ENCODE measurements at regions of chr1 and their contacts with region 1.

Region 1: DNA sequence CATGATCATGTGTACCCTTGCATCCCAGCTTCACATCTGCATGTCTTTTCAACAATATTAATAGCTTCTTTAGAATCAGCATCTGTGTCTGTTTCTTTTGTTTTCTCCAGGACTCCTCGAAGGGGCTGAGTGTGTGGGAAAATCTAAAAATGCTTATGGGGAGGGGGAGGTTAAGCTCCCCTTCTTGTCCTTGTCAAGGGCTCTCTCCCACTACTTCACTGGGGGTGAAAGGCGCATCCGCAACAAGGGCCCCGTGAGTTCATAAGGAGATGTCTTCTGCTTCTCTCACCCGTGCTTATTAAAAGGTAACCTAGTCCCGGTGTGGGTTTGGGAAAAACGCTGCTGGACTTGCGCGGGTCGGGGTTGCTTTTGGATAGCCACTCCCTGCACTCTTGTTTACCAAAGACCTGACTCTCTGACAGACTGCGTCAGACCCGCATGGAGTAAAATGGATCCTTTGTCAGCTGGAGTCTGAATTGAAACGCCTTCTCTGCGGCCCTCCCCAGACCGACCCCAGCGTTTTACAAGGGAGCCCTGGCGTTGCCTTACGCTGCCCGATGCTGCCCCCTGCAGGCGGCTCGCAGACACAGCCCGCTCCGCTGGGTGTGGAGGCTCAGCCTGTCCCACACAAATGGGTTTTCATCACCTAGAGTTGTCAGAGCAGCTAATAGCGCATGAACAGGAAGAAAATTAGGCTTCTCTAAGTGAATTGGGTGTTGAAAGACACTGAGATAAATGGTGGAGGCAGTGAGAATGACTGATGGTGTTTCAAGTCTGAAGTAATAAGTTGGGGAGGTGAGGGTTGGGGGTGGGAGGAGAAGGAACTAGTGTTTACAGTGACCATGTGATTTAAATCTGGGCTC is 53.8 kb downstream of the IER5 start:
- DNase-seq: peak; percentile 76 to 89 (median 80)
- H3K4me3 ChIP-seq: no peak overlapping the region
- H3K4me3 Mint-ChIP-seq: peak overlapping the region in 1 of 7 donors; percentile 36
- H3K27ac ChIP-seq: no peak overlapping the region
- H3K27ac Mint-ChIP-seq: peak overlapping the region in 5 of 8 donors; percentile 13 to 58 (median 47)
- H3K4me1 ChIP-seq: peaks cover 18% of the 10 kb centered on the region
- H3K4me1 Mint-ChIP-seq: peaks cover 21 to 30% (median 29%) of the 10 kb centered on the region in 3 donors
- H3K27me3 ChIP-seq: no peaks in the 10 kb centered on the region
- H3K27me3 Mint-ChIP-seq: peaks cover 0 to 3% of the 10 kb centered on the region in 2 donors

Region 2: DNA sequence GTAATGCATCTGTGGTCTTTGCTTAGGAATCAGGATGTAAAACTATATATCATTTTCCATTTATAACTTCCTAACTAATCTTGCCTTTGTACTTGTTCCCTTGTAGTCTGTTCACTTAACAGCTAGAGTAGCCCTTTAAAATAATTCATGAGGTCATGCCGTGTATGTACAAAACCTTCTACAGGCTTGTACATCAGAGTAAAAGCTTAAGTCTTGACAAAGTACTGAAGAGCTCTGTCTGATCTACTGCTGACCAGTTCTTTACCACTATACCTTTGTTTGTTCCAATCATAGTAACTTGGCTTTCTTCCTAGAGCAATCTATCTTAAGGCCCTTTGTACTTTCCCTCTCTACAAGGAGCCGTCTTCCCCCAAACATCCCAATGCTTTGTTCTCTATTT is 320.4 kb before region 1 on chr1:
- CTCF ChIA-PET with region 1: no interaction called
- POLR2A ChIA-PET with region 1: no interaction called
- DNase-seq: no peak
- H3K4me3 ChIP-seq: no peak overlapping the region
- H3K4me3 Mint-ChIP-seq: no peak overlapping the region
- H3K27ac ChIP-seq: no peak overlapping the region
- H3K27ac Mint-ChIP-seq: no peak overlapping the region
- H3K4me1 ChIP-seq: no peaks in the 10 kb centered on the region
- H3K4me1 Mint-ChIP-seq: no peaks in the 10 kb centered on the region
- H3K27me3 ChIP-seq: no peaks in the 10 kb centered on the region
- H3K27me3 Mint-ChIP-seq: no peaks in the 10 kb centered on the region

Region 3: GRCh38 chr1:180863158-180863775 is 279.1 kb before region 1 on chr1:
- CTCF ChIA-PET with region 1: interaction called, 11 read pairs
- POLR2A ChIA-PET with region 1: no interaction called
- DNase-seq: peak in 3 of 5 donors; percentile 3 to 19 (median 16)
- H3K4me3 ChIP-seq: no peak overlapping the region
- H3K4me3 Mint-ChIP-seq: no peak overlapping the region
- H3K27ac ChIP-seq: no peak overlapping the region
- H3K27ac Mint-ChIP-seq: no peak overlapping the region
- H3K4me1 ChIP-seq: no peaks in the 10 kb centered on the region
- H3K4me1 Mint-ChIP-seq: no peaks in the 10 kb centered on the region
- H3K27me3 ChIP-seq: no peaks in the 10 kb centered on the region
- H3K27me3 Mint-ChIP-seq: no peaks in the 10 kb centered on the region

Region 4: GRCh38 chr1:181062836-181063428 is 79.4 kb before region 1 on chr1:
- CTCF ChIA-PET with region 1: interaction called, 13 read pairs
- POLR2A ChIA-PET with region 1: no interaction called
- DNase-seq: peak in 4 of 5 donors; percentile 2 to 50 (median 23)
- H3K4me3 ChIP-seq: no peak overlapping the region
- H3K4me3 Mint-ChIP-seq: peak overlapping the region; percentile 40 to 88 (median 80)
- H3K27ac ChIP-seq: no peak overlapping the region
- H3K27ac Mint-ChIP-seq: peak overlapping the region; percentile 75 to 99 (median 91)
- H3K4me1 ChIP-seq: peaks cover 8% of the 10 kb centered on the region
- H3K4me1 Mint-ChIP-seq: peaks cover 22 to 28% (median 27%) of the 10 kb centered on the region in 3 donors
- H3K27me3 ChIP-seq: no peaks in the 10 kb centered on the region
- H3K27me3 Mint-ChIP-seq: peaks cover 0 to 3% of the 10 kb centered on the region in 2 donors

Region 5: GRCh38 chr1:181088079-181089016 is 54.0 kb before region 1 on chr1 and contains the start of gene IER5:
- CTCF ChIA-PET with region 1: interaction called, 98 read pairs
- POLR2A ChIA-PET with region 1: interaction called, 7 read pairs
- DNase-seq: peak; percentile 89 to 98 (median 93)
- H3K4me3 ChIP-seq: peak within 1 kb of the TSS; percentile 88
- H3K4me3 Mint-ChIP-seq: peak within 1 kb of the TSS; percentile 96 to 100 (median 99)
- H3K27ac ChIP-seq: peak within 1 kb of the TSS; percentile 99
- H3K27ac Mint-ChIP-seq: peak within 1 kb of the TSS; percentile 98 to 100 (median 99)
- H3K4me1 ChIP-seq: peaks cover 27% of the 10 kb centered on the region
- H3K4me1 Mint-ChIP-seq: peaks cover 32 to 45% (median 43%) of the 10 kb centered on the region in 3 donors
- H3K27me3 ChIP-seq: no peaks in the 10 kb centered on the region
- H3K27me3 Mint-ChIP-seq: peaks cover 0 to 6% of the 10 kb centered on the region in 2 donors
- total RNA-seq, gene IER5: 52.3 to 57.2 TPM

Region 6: GRCh38 chr1:181112071-181112929 is 30.0 kb before region 1 on chr1:
- CTCF ChIA-PET with region 1: interaction called, 12 read pairs
- POLR2A ChIA-PET with region 1: no interaction called
- DNase-seq: no peak
- H3K4me3 ChIP-seq: no peak overlapping the region
- H3K4me3 Mint-ChIP-seq: no peak overlapping the region
- H3K27ac ChIP-seq: no peak overlapping the region
- H3K27ac Mint-ChIP-seq: peak overlapping the region in 3 of 8 donors; percentile 18 to 81 (median 40)
- H3K4me1 ChIP-seq: peaks cover under 1% of the 10 kb centered on the region
- H3K4me1 Mint-ChIP-seq: no peaks in the 10 kb centered on the region
- H3K27me3 ChIP-seq: no peaks in the 10 kb centered on the region
- H3K27me3 Mint-ChIP-seq: peaks cover 6 to 19% of the 10 kb centered on the region in 2 donors

Region 7: DNA sequence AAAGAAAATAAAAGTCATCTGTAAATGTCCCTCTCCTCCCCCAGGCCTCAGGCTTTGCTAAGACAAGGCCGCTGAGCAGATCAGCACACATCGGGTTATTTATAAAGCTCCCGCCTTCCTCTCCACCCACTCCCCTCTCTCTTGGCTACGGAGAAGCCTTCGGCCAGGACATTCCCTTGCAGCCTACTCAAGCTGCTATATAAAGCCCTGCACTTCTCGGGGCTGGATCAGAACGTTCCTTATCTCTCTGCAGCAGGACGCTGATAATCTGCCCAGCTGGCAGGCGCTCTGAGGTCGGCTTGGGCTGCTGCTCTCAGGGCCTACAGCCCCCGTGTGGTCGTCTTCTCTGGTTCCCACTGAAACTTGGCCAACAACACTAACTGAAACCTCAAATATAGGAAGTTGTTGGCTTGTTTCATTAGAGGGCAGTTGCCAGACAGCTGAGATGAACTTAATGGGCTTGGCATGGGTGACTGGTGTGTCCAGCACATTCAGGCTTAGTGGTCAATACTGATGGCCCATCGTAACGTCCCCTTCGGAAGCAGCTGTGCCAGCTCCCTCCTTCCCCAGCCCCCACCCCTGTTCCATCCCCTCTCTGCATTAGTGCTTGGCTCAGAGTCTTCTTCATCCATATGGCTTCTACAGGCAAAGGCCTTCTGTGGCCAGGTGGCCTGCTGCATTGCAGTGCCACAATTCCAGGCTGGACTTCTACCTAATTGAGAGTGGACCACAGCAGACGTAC is 10.7 kb after region 1 on chr1:
- CTCF ChIA-PET with region 1: interaction called, 23 read pairs
- POLR2A ChIA-PET with region 1: no interaction called
- DNase-seq: no peak
- H3K4me3 ChIP-seq: no peak overlapping the region
- H3K4me3 Mint-ChIP-seq: no peak overlapping the region
- H3K27ac ChIP-seq: peak overlapping the region; percentile 44
- H3K27ac Mint-ChIP-seq: no peak overlapping the region
- H3K4me1 ChIP-seq: peaks cover 56% of the 10 kb centered on the region
- H3K4me1 Mint-ChIP-seq: peaks cover 43 to 59% (median 52%) of the 10 kb centered on the region in 3 donors
- H3K27me3 ChIP-seq: no peaks in the 10 kb centered on the region
- H3K27me3 Mint-ChIP-seq: no peaks in the 10 kb centered on the region

Region 8: GRCh38 chr1:181166377-181167196 is 24.3 kb after region 1 on chr1:
- CTCF ChIA-PET with region 1: interaction called, 81 read pairs
- POLR2A ChIA-PET with region 1: no interaction called
- DNase-seq: peak; percentile 46 to 79 (median 68)
- H3K4me3 ChIP-seq: peak overlapping the region; percentile 16
- H3K4me3 Mint-ChIP-seq: peak overlapping the region in 5 of 7 donors; percentile 55 to 69 (median 58)
- H3K27ac ChIP-seq: no peak overlapping the region
- H3K27ac Mint-ChIP-seq: peak overlapping the region in 5 of 8 donors; percentile 3 to 80 (median 50)
- H3K4me1 ChIP-seq: peaks cover 7% of the 10 kb centered on the region
- H3K4me1 Mint-ChIP-seq: peaks cover 5 to 6% (median 5%) of the 10 kb centered on the region in 3 donors
- H3K27me3 ChIP-seq: no peaks in the 10 kb centered on the region
- H3K27me3 Mint-ChIP-seq: no peaks in the 10 kb centered on the region

Measured in CD8-positive, alpha-beta memory T cell (primary cell).